PC-3 (cell line): ENCODE measurements at regions of chr5 and their contacts with region 1.

Region 1: GRCh38 chr5:154575546-154576428 is 97.8 kb upstream of the HAND1 start:
- DNase-seq: peak; percentile 18
- ATAC-seq: peak; percentile 53
- H3K4me3 ChIP-seq: no peak overlapping the region
- H3K27ac ChIP-seq: no peak overlapping the region
- H3K4me1 ChIP-seq: no peaks in the 10 kb centered on the region; the same call in 1 of the 2 replicates
- H3K27me3 ChIP-seq: no peaks in the 10 kb centered on the region
- CTCF ChIP-seq: peak; percentile 43

Region 2: DNA sequence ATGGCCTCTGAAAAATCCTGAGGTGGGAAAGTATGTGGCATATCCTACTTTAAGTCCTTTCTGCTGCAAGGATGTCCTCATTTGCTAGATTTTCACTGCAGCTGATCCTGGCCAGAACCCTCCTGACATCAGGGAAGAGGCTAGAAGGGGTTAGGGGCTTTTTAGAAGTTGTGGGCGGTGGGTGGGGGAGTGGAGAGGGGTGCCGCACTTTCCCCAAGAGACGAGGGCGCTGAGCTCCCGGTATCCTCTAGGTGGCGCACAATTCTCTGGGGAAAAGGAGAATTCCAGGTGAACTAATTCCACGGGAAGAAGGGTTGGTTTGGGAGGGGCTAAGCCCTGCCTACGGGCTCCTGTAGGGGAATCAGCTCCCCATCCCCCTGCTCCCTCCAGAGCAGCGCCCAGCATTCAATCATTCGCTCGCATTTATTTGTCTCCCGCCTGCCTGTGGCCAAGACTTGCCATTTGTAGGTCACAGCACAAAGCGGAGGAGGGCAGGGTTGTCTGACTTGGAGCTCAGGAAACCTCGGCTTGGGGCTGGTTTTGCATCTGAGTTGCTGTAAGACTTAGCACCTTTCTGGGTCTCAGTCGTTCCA is 54.8 kb before region 1 on chr5:
- CTCF ChIA-PET with region 1: no interaction called
- POLR2A ChIA-PET with region 1: no interaction called
- intact Hi-C with region 1: loop called (anchors 5 kb)
- DNase-seq: peak; percentile 70
- ATAC-seq: peak; percentile 33; the same call in 1 of the 2 replicates
- H3K4me3 ChIP-seq: no peak overlapping the region
- H3K27ac ChIP-seq: no peak overlapping the region
- H3K4me1 ChIP-seq: peaks cover 21% of the 10 kb centered on the region
- H3K27me3 ChIP-seq: no peaks in the 10 kb centered on the region
- CTCF ChIP-seq: peak; percentile 77